ENCODE measurements at regions of chr16 and their contacts with region 1.

Region 1: DNA sequence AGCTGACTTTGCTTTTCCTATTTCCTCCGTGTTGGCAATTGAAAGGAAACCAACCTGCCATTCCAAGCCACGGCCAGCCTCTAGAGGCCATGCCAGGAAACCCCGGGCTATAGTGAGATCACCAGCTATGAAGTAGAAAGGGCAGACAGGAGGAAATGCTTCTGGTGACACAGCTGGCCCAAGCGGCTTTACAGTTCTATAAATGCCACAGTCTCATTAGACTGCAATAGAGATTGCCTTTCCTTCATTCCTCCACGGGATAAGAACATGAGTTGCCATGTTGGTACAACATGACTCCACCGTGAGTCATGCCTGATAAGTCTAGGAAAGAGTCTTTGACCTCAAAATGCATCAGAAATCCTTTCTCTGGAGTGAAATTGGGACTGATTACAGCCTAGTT is 384.9 kb downstream of the GRIN2A start:
- DNase-seq: no peak

Region 2: DNA sequence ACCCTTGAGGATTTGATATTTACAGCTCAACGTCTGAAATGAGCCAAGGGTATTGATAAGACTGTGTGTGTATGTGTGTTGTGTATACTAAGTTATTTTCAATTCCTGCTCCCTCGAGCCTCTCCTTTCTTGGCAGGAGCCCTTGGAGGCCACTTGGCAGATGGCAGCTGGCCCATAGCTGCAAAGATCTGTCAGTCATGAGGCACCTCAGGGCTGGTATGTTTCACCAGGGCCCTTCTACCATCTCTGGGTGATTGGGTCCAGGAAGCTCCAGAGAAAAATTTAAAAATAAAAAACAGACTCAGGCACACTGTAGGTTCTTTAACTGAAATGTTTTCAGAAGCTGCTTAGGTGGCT is 350.1 kb before region 1 on chr16:
- intact Hi-C with region 1: loop called (anchors 5 kb)
- DNase-seq: peak; percentile 81